ENCODE measurements at regions of chr20 and their contacts with region 1.

Region 1: DNA sequence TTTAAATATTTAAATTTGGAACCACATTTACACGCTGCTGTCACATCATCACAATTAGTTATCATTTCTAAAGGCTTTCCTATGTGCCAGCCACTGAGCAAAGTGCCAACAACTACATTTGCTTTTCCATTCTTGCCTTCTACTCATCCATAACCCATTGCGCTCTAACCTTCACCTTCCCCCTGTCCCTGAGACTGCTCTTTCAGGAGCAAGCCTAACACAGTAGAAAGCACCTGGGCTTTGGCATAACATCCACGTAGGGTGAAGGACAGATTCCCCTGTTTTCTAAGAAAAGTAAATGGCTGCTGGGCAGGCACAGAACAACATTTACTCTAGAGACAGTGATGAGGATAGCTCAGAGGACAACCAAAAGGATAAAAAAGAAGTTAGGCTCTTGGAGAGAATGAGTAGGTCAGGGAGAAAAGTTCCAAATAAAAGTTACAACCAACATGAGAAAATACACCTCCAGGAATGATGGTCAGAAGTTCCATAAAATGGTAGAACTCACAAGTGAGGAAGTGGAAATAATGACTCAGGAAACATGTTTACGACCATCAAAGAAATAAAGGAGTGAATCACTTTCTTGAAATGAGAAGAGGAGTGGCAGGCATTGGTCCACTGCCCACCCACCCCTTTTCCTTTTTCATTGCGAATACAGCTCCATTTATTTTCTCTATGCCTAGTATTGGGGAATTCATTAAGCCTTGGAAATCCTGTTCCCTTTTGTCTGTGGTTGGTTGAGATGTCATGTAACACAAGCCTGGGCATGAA is 77.2 kb downstream of the PFDN4 start:
- DNase-seq: no peak
- H3K4me3 Mint-ChIP-seq: peak overlapping the region; percentile 84
- H3K27ac Mint-ChIP-seq: peak overlapping the region; percentile 93
- H3K4me1 Mint-ChIP-seq: peaks cover 27% of the 10 kb centered on the region
- H3K27me3 Mint-ChIP-seq: no peaks in the 10 kb centered on the region

Region 2: DNA sequence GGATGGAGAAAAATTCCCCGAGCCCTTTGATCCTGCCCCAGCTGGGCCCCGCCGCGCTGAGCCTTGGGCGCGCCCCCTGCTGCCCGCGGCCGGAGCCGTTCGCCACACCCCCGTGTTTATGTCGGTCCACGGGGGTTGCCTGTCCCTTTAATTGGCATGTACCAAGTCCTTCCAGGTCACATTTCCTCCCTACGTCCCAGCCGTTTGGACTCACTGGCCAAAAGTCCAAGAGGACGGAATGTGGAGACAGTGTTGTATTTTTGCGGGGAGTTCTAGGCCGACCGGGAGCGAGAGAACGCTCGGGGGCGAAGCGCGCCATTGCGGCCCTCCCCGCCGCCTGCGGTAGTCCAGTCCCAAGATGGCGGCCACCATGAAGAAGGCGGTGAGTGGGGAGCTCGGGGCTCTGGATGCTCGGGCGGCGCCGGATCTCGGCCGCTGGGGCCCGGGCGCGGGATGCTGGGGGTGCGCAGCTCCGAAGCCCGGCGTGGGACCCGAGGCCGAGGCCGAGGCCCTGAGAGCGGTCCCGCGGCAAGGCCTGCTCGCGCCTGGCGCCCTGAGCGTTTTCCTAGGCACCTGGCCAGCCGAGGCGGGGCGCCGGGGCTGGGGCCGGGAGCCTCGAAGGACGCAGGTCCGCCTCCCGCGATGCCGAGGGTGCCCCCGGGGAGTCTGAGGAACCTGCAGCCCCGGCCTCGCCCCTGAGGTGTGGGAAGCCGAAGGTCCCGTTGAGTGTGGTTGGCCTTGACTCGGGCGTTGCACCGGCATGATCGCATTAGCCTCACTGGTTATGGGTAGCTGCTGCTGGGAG is 77.2 kb before region 1 on chr20 and contains the start of gene PFDN4:
- intact Hi-C with region 1: loop called (anchors 2 kb)
- DNase-seq: peak; percentile 95
- H3K4me3 Mint-ChIP-seq: peak within 1 kb of the TSS; percentile 88
- H3K27ac Mint-ChIP-seq: peak within 1 kb of the TSS; percentile 100
- H3K4me1 Mint-ChIP-seq: peaks cover 39% of the 10 kb centered on the region
- H3K27me3 Mint-ChIP-seq: no peaks in the 10 kb centered on the region
- total RNA-seq, gene PFDN4: 72.2 and 80.5 TPM in 2 replicates

Region 3: GRCh38 chr20:54219751-54220426 is 65.2 kb before region 1 on chr20:
- intact Hi-C with region 1: loop called (anchors 2 kb)
- DNase-seq: no peak
- H3K4me3 Mint-ChIP-seq: no peak overlapping the region
- H3K27ac Mint-ChIP-seq: no peak overlapping the region
- H3K4me1 Mint-ChIP-seq: peaks cover 20% of the 10 kb centered on the region
- H3K27me3 Mint-ChIP-seq: no peaks in the 10 kb centered on the region

Region 4: DNA sequence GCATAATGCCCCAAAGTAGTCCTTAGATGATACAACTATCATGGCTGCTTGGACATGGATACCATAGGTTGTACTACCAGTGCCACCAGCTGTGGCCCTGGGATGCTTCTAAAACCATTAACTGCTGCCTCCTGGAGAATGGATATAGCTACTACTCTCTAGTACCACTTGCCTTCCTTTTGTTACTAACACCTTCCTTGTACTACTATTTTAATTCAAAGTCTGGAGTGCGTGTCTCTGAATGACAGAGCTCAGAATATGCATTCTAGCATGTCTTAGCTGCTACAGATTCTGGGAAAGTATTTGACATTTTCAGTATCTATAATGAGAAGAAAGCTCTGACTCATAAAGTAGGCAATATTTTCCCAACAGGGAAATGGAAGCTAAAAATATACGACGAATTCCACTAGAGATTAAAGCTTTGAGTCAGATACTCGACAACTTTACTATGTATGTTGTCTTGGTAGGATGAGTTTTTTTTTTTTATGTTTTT is 35.0 kb after region 1 on chr20:
- intact Hi-C with region 1: loop called (anchors 1 kb)
- DNase-seq: no peak
- H3K4me3 Mint-ChIP-seq: no peak overlapping the region
- H3K27ac Mint-ChIP-seq: peak overlapping the region; percentile 62
- H3K4me1 Mint-ChIP-seq: peaks cover 25% of the 10 kb centered on the region
- H3K27me3 Mint-ChIP-seq: no peaks in the 10 kb centered on the region

Region 5: DNA sequence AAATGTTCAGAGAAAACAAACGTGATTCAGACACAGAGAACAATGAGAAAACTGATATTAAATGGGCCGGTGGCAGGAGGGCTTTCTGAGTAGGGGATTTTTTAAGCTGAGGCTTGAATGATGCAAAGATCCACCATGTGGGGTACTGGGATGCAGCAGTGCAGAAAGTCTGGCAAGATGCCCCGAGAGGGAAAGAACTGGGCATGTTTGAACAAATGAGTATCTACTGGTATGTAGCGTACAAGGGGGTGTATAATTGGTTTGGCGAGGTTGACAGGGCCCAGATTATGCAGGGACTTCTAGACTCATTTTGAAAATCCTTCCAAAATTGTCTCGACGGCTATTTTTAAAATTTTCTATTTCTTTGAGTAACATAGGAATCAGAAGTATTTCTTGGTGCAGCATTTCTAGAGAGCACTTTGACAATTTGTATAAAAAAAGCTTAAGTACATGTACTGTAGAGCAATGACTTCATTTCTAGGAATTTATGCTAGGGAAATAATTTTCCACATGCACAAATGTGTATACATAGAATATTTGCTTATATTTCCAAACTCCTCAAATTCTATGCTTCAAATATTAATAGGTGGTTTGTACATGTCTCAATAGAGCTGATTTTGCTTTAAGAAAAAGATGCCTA is 70.6 kb after region 1 on chr20:
- intact Hi-C with region 1: loop called (anchors 2 kb)
- DNase-seq: peak; percentile 46
- H3K4me3 Mint-ChIP-seq: no peak overlapping the region
- H3K27ac Mint-ChIP-seq: no peak overlapping the region
- H3K4me1 Mint-ChIP-seq: peaks cover 2% of the 10 kb centered on the region
- H3K27me3 Mint-ChIP-seq: no peaks in the 10 kb centered on the region

Region 6: DNA sequence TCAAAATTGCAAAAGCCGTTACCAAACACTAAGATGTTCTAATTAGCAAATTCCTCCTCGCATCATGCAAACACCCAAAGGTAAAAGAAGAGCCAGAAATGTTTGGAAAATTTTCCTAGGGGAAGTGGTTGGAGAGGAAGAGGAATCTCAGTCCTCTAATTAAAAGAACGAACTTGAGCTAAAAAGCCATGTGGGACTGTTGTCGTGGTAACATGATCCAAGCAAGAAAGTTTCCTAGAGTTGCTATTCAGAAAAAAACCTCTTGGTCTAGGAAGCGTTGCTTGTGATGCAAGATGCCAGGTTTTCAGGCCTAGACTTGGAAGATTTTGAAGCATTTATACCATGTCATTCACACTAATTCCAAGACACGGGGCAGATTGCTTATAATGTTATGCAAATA is 83.4 kb after region 1 on chr20:
- intact Hi-C with region 1: no loop called
- DNase-seq: no peak
- H3K4me3 Mint-ChIP-seq: no peak overlapping the region
- H3K27ac Mint-ChIP-seq: no peak overlapping the region
- H3K4me1 Mint-ChIP-seq: peaks cover 4% of the 10 kb centered on the region
- H3K27me3 Mint-ChIP-seq: peaks cover 2% of the 10 kb centered on the region